GM23248 (cell line): ENCODE measurements at regions of chr6 and their contacts with region 1.

Region 1: GRCh38 chr6:134822920-134823709 is 126.8 kb downstream of the ALDH8A1 start:
- DNase-seq: peak; percentile 85
- H3K4me3 ChIP-seq: 0 out of 2 replicates have a peak overlapping the region, but pooled peaks have one; percentile 17
- H3K27ac ChIP-seq: no peak overlapping the region
- H3K4me1 ChIP-seq: peaks cover 30% of the 10 kb centered on the region
- H3K27me3 ChIP-seq: no peaks in the 10 kb centered on the region

Region 2: DNA sequence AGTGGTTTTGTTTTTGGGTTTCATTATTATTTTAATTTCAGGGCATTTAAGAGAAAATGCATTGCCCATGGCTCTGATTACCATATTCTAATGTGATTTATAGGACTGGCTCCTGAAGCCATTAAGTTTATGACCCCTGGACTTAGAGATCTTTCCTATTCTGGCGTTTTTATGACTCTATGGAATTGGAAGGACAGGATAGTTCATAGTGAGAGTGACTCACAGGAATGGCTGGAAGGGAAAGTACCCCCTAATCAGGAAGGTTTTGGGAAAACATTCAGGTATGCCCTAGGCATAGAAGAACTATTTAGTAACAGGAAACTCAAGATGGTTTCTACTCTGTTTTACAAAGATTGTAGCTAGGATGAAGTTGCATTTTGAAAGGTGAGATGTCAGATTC is 662.1 kb before region 1 on chr6:
- in situ Hi-C with region 1: loop called (anchors 5 kb)
- DNase-seq: peak; percentile 14
- H3K4me3 ChIP-seq: no peak overlapping the region
- H3K27ac ChIP-seq: no peak overlapping the region
- H3K4me1 ChIP-seq: peaks cover 15% of the 10 kb centered on the region
- H3K27me3 ChIP-seq: no peaks in the 10 kb centered on the region

Region 3: GRCh38 chr6:134398453-134398852 is 424.7 kb before region 1 on chr6:
- in situ Hi-C with region 1: no loop called
- DNase-seq: no peak
- H3K4me3 ChIP-seq: no peak overlapping the region
- H3K27ac ChIP-seq: no peak overlapping the region
- H3K4me1 ChIP-seq: no peaks in the 10 kb centered on the region
- H3K27me3 ChIP-seq: no peaks in the 10 kb centered on the region

Region 4: DNA sequence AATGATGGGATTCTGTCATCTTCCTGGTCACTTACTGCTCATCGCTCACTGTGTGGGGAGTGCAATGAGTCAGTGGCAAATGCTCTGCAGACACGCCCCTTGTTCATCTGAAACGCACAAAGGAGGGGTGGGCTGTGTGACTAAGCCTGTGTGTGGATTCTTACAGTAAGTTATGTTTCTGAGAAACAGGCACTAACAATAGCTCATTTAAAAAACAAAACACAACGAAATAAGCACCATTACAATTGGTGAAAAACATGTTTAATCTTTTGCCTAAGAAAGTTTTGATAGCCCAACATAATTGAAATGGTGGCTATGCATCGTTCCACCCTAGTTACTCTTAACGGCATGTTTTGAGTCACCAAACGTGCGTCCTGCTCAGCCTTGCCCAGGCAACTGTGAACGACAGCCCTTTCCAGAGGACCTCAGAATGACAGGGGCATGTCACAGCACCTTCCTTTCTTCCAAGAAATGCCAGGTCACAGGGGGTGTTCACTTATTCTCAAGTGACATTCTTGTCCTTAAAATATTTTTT is 386.8 kb before region 1 on chr6:
- in situ Hi-C with region 1: loop called (anchors 25 kb)
- DNase-seq: peak; percentile 98
- H3K4me3 ChIP-seq: peak overlapping the region; percentile 58
- H3K27ac ChIP-seq: peak overlapping the region; percentile 95
- H3K4me1 ChIP-seq: peaks cover 34% of the 10 kb centered on the region
- H3K27me3 ChIP-seq: no peaks in the 10 kb centered on the region

Region 5: DNA sequence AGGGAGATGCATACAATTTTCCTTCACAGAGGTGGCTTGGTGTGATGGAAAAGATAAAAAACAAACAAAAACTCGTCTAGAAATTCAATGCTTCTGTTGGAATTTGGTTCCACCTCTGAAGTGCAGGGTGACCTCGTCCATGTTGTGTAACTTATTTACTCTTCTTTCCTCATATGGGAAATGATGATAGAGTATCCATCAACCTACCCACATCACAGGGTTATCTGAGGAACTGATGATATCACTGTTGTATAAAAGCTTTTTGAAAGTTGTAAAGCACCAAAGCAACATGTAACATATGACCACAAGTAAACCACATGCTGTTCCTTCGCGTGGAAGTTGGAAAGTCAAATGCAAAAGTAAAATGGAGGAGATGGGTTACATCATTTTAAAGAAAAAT is 293.2 kb before region 1 on chr6:
- in situ Hi-C with region 1: no loop called
- DNase-seq: peak; percentile 49
- H3K4me3 ChIP-seq: no peak overlapping the region
- H3K27ac ChIP-seq: no peak overlapping the region
- H3K4me1 ChIP-seq: peaks cover 7% of the 10 kb centered on the region; the same call in 1 of the 2 replicates
- H3K27me3 ChIP-seq: no peaks in the 10 kb centered on the region

Region 6: DNA sequence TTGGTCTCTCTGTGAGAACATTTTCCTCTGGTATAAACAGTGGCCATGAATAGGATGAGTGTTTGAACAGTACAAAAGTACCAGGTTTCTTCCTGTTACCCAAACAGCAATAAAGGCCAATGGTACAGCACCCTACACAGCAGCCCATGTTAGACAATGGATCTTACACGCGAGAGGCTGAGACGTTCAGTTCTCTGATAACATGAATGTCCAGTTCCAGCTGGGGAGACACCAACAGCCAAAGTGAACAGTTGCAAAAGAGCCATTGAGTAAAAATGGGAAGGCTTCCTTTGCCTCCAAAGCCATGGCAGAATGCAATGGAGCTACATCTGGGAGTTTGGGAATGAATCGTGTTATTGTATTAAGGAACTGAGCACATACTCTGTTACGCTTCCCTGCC is 258.4 kb before region 1 on chr6:
- in situ Hi-C with region 1: no loop called
- DNase-seq: no peak
- H3K4me3 ChIP-seq: no peak overlapping the region
- H3K27ac ChIP-seq: no peak overlapping the region
- H3K4me1 ChIP-seq: no peaks in the 10 kb centered on the region
- H3K27me3 ChIP-seq: no peaks in the 10 kb centered on the region

Region 7: GRCh38 chr6:134678436-134678889 is 144.7 kb before region 1 on chr6:
- in situ Hi-C with region 1: loop called (anchors 25 kb)
- DNase-seq: no peak
- H3K4me3 ChIP-seq: no peak overlapping the region
- H3K27ac ChIP-seq: no peak overlapping the region
- H3K4me1 ChIP-seq: peaks cover 9% of the 10 kb centered on the region
- H3K27me3 ChIP-seq: no peaks in the 10 kb centered on the region

Region 8: GRCh38 chr6:134938896-134939295 is 115.8 kb after region 1 on chr6:
- in situ Hi-C with region 1: loop called (anchors 10 kb)
- DNase-seq: no peak
- H3K4me3 ChIP-seq: no peak overlapping the region
- H3K27ac ChIP-seq: no peak overlapping the region
- H3K4me1 ChIP-seq: peaks cover 14% of the 10 kb centered on the region
- H3K27me3 ChIP-seq: no peaks in the 10 kb centered on the region